ENCODE measurements at regions of chr10 and their contacts with region 1.

Region 1: GRCh38 chr10:110206995-110207804 is at the start of gene MXI1:
- DNase-seq: peak; percentile 81
- ATAC-seq: peak; percentile 10 to 42
- total RNA-seq, gene MXI1: 38.7 to 43.0 TPM

Region 2: GRCh38 chr10:108966005-108966404 is 1241.2 kb before region 1 on chr10:
- intact Hi-C with region 1: no loop called
- DNase-seq: no peak
- ATAC-seq: no peak

Region 3: GRCh38 chr10:110129490-110129889 is 77.7 kb before region 1 on chr10:
- intact Hi-C with region 1: no loop called
- DNase-seq: no peak
- ATAC-seq: no peak

Region 4: GRCh38 chr10:110279407-110279986 is 72.3 kb after region 1 on chr10:
- intact Hi-C with region 1: loop called in 1 of 2 experiments (anchors 2 kb)
- DNase-seq: peak; percentile 45
- ATAC-seq: peak; percentile 76 to 90

Region 5: DNA sequence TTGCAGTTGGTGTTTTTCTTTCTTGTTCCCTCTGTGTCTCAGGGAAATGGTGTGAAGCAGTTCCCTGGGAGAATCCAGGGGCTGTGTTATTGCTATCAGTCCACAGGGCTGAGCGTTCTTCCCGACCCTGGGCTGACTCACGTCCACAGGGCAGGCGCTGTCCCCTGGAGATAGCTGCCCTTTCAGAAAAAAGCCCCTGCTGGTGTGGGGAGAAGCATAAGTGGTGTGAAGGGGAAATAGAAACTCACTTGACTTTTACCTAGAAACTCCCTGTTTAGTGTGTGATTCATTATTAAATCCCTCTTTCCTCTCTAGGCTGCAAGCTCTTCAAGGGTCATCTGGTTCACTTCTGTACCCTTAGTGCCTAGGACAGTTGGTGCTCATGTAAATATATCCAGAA is 160.8 kb after region 1 on chr10:
- intact Hi-C with region 1: no loop called
- DNase-seq: no peak
- ATAC-seq: peak in 1 of 2 donors; percentile 51

Measured in left cardiac atrium (tissue), 4 donors.